Activated naive CD4-positive, alpha-beta T cell treated with anti-CD3 and anti-CD28 coated beads, Interleukin-2, amount 10 ng/mL, durations not matched to agents 7 days and 5 days (primary cell): ENCODE measurements at regions of chr9 and their contacts with region 1.

Region 1: DNA sequence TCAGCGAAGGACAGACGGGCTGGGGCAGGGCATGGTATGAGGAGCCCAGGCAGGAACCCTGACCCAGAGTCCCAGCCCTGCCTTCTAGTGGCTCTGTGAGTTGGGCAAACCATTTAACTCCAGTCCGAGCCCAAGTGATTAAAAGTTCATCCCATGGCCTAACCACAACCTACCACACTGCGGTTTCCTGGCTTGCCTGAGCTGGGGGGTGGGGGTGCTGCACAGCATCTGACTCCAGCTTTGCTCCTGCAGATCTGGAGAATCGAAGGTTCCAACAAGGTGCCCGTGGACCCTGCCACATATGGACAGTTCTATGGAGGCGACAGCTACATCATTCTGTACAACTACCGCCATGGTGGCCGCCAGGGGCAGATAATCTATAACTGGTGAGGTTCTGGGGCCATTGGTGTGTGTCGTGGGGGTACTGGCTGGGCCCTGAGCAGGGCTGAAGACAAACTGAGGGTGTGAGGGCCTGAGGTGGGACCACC is 49.0 kb downstream of the STOM start:
- DNase-seq: peak; percentile 52
- H3K4me3 Mint-ChIP-seq: no peak overlapping the region
- H3K27ac Mint-ChIP-seq: no peak overlapping the region
- H3K4me1 Mint-ChIP-seq: peaks cover 28% of the 10 kb centered on the region
- H3K27me3 Mint-ChIP-seq: no peaks in the 10 kb centered on the region

Region 2: DNA sequence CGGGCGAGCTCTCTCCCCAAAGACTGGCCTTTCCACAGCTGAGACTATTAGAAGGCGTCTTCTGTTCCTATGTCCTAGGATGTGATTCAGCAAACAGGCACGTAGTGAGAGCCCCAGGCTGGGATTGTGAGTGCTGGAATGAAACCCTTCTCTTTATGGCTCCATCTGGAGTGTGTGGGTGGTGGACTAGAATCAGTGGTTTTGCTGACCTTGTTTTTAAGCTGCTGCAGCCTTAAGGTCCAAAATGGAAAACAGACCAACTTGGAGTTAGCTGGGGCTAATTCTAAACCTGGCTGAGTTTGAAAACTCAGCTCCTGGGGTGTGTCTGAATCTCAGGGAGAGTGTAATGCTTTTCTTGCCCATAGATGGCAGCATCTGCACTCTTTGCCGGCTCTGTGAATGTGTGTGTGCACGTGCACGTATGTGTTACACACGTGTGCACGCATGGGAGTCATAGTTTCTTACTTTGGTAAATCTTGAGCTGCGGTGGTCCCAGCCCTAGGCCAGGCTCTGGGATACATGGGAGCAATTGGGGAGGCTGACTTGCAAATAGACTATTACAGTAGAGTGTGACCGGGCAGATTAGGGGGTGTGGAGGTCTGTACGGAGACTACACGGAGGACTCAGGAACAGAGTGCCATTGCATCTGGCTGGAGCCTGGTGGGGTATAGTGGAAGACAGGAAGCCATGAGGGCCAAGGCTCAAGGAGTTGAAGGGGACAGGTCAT is 42.4 kb before region 1 on chr9:
- CTCF ChIA-PET with region 1: interaction called, 17 read pairs
- DNase-seq: peak; percentile 55
- H3K4me3 Mint-ChIP-seq: no peak overlapping the region
- H3K27ac Mint-ChIP-seq: no peak overlapping the region
- H3K4me1 Mint-ChIP-seq: peaks cover 5% of the 10 kb centered on the region
- H3K27me3 Mint-ChIP-seq: peaks cover 20% of the 10 kb centered on the region

Region 3: GRCh38 chr9:121289026-121289771 is 31.9 kb before region 1 on chr9:
- CTCF ChIA-PET with region 1: no interaction called
- DNase-seq: no peak
- H3K4me3 Mint-ChIP-seq: no peak overlapping the region
- H3K27ac Mint-ChIP-seq: no peak overlapping the region
- H3K4me1 Mint-ChIP-seq: peaks cover 11% of the 10 kb centered on the region
- H3K27me3 Mint-ChIP-seq: peaks cover 9% of the 10 kb centered on the region

Region 4: DNA sequence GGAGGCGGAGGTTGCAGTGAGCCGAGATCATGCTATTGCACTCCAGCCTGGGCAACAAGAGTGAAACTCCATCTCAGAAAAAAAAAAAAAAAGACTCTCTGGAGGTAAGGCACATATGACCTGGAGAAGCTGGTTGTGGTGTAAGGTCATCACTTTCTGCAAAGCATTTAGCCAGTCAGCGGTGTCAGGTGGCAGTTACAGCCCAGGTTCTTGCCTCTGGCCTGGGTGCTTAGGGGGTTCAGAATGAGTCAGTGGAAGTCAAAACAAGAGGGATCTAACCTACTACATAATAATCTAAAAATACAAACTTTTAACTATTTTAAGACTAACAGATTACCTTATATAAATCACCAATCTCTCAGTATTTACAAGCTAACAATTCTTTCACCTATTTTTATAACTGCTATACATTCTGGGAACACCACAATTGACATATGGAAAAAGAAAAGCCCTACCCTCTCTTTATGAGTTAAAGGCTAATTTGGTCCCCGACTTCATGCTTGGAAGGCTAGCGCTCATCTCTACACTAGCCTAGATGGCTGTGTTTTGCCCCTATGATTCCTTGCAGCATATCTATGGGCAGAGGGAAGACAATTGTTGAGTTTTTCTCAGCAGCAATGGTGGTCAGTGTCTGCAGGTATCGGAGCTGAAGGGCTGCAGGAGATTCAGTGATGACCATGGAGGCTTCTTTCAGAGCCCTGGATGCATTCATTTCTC is 19.8 kb after region 1 on chr9:
- CTCF ChIA-PET with region 1: interaction called, 18 read pairs
- DNase-seq: no peak
- H3K4me3 Mint-ChIP-seq: no peak overlapping the region
- H3K27ac Mint-ChIP-seq: no peak overlapping the region
- H3K4me1 Mint-ChIP-seq: no peaks in the 10 kb centered on the region
- H3K27me3 Mint-ChIP-seq: no peaks in the 10 kb centered on the region

Region 5: DNA sequence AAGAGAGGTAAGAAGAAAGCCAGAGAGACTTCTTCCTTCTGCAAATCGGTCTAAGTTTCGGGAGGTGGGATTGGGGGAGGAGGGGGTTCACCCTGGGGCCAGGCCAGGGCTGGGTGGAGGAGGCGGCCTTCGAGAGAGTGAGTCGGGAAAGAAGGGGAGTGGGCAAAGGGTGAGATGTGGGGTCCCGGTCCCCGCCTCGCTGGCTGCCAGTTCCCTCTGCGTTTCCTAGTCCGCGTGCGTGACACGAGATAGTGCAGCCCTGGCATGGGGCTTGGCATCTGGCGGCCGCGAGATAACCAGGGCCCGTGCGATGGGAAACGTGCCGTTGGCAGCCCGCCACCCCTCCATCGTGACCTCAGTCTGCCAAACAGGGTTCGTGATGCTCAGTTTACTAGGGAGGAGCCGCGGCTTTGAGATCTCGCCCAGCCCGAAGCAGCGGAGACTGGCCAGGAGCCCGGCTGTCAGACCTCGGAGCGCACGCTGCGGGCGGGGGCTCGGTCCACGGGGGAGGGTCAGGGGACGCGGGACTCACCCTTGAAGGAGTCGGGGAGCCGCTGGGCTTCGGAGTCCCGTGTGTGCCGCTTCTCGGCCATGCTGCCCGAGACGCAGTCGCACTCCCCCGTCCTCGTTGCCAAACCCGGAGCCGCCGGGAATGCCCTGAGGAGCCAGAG is 48.7 kb after region 1 on chr9 and contains the start of gene STOM:
- CTCF ChIA-PET with region 1: interaction called, 74 read pairs
- DNase-seq: peak; percentile 71
- H3K4me3 Mint-ChIP-seq: peak within 1 kb of the TSS; percentile 84
- H3K27ac Mint-ChIP-seq: peak within 1 kb of the TSS; percentile 89
- H3K4me1 Mint-ChIP-seq: peaks cover 35% of the 10 kb centered on the region
- H3K27me3 Mint-ChIP-seq: peaks cover 11% of the 10 kb centered on the region

Region 6: GRCh38 chr9:121388140-121388905 is 67.3 kb after region 1 on chr9:
- CTCF ChIA-PET with region 1: interaction called, 326 read pairs
- DNase-seq: no peak
- H3K4me3 Mint-ChIP-seq: no peak overlapping the region
- H3K27ac Mint-ChIP-seq: peak overlapping the region; percentile 52
- H3K4me1 Mint-ChIP-seq: peaks cover 13% of the 10 kb centered on the region
- H3K27me3 Mint-ChIP-seq: peaks cover 30% of the 10 kb centered on the region

Region 7: DNA sequence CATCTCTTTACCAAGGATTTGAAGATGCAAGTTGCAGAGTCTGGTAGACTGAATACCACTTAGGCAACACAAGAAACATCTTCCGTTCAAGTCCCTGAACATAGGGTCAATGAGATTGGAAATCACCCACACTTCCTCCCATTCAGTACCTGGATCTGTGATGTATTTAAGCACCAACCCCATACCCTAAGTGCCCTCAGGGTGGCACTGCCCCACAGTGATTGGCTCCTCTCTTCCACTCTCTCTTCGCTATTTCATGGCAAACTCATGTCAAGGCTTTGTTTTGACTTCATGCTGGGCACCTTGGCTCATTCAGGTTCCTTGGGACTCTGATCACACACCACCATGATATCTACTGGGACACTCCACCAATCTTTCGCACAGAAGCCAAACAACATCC is 124.9 kb after region 1 on chr9:
- CTCF ChIA-PET with region 1: no interaction called
- DNase-seq: no peak
- H3K4me3 Mint-ChIP-seq: no peak overlapping the region
- H3K27ac Mint-ChIP-seq: no peak overlapping the region
- H3K4me1 Mint-ChIP-seq: peaks cover 7% of the 10 kb centered on the region
- H3K27me3 Mint-ChIP-seq: peaks cover 30% of the 10 kb centered on the region